ENCODE measurements at regions of chr11 and their contacts with region 1.

Region 1: GRCh38 chr11:112156956-112157766 is 6.7 kb downstream of the IL18 start:
- DNase-seq: peak; percentile 93
- H3K27ac ChIP-seq: peak overlapping the region; percentile 83
- CTCF ChIP-seq: no peak

Region 2: DNA sequence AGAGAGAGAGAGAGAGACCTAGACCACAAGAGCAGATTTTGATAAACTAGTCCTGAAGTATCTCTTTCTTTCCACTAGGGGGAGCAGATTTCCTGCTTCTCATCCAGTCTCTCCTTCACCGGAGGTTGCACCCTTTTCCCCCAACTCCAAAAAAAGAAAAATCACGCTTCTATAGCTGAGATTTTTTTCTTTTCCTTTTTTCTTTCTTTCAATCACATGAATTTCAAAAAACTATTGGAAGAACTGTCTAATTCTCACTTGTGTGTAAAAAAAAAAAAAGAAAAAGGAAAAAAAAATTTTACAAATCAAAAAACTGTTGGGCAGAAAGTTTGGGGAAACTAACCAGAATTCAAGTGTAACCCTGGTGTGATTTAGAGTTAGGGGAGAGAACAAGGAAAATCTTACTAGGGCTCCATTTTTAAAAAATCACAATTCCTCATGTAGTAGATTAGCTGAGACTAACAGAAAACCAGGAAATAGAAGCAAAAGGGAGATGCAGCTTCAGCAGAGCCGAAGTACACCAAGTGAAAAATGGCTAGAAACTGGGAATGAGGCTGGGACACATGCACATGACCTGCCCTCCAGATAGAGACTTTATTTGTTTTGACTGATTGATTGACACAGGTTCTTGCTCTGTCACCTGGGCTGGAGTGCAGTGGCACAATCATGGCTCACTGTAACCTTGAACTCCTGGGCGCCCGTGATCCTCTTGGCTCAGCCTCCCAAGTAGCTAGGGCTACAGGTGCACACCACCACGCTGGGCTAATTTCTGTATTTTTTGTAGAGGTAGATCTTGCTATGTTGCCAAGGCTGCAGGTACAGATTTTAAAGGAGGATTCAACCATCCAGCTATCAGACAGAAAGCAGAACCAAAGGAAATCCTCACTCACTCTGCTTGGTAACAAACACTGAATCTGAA is 43.4 kb before region 1 on chr11:
- CTCF ChIA-PET with region 1: interaction called, 10 read pairs
- POLR2A ChIA-PET with region 1: no interaction called
- DNase-seq: peak; percentile 48
- H3K27ac ChIP-seq: no peak overlapping the region
- CTCF ChIP-seq: peak; percentile 45

Region 3: GRCh38 chr11:112241486-112241885 is 84.3 kb after region 1 on chr11:
- CTCF ChIA-PET with region 1: no interaction called
- POLR2A ChIA-PET with region 1: no interaction called
- DNase-seq: no peak
- H3K27ac ChIP-seq: no peak overlapping the region
- CTCF ChIP-seq: no peak

Measured in RWPE1 (cell line).